ENCODE measurements at regions of chr9 and their contacts with region 1.

Region 1: DNA sequence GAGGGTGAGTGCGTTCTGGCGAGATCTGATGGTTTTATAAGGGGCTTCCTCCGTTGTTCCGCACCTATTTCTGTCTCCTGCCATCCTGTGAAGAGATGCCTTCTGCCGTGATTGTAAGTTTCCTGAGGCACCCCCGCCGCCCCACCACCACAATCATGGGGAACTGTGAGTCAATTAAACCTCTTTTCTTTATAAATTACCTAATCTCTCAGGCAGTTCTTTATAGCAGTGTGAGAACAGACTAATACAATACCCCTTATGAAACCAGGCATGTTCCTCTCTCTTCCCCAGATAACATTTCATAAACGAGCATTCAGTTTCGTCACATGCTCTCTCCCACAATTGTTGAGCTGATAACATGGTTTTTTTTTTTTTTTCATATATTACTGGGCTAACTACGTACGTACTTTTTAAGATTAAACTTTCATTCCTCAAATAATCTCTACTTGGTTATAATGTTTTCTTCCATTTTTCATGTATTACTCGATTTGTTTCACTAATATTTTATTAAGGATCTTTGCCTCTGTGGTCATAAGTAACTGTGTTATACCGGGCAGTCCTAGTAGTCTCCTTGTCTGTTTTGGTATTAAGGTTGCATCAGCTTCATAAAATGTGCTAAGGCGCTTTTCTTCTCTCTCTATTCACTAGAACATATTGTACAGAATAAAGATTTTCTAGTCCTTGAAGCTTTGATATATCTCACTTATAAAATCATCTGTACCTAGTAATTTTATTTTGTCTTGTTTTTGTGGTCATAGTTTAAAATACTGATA is 64.9 kb upstream of the MVB12B start:
- DNase-seq: no peak
- H3K4me3 ChIP-seq: no peak overlapping the region
- CTCF ChIP-seq: no peak
- POLR2A ChIP-seq: no peak

Region 2: DNA sequence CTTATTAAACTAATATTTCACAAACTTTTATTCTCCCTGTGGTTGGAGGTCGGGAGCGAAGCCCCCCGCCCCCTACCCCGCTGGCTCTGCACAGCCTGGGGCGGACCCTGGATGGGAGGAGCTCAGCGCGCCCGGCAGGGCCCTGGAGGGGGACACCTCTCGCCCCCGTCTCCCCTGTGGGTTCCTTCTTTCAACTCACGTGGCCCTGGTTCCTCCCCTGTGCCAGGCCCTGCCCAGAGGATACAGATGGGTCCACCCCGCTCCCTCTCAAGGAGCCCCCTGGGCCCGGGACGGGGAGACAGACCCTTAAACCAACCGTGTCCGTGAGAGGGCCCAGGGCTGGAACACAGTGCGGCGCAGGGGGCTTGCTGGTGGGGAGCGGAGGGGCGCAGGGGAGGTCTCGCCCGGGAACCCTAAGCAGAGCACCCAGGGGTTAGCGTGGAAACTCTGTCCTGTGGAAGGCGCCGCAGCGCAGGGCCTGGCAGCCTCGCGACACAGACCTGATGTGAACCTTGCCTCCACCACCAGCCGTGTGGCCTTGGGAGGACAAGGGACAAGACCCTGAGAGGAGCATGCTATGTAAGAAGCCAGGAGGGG is 38.8 kb before region 1 on chr9:
- intact Hi-C with region 1: no loop called
- DNase-seq: peak in 1 of 2 donors; percentile 64
- H3K4me3 ChIP-seq: no peak overlapping the region
- CTCF ChIP-seq: no peak
- POLR2A ChIP-seq: no peak

Region 3: DNA sequence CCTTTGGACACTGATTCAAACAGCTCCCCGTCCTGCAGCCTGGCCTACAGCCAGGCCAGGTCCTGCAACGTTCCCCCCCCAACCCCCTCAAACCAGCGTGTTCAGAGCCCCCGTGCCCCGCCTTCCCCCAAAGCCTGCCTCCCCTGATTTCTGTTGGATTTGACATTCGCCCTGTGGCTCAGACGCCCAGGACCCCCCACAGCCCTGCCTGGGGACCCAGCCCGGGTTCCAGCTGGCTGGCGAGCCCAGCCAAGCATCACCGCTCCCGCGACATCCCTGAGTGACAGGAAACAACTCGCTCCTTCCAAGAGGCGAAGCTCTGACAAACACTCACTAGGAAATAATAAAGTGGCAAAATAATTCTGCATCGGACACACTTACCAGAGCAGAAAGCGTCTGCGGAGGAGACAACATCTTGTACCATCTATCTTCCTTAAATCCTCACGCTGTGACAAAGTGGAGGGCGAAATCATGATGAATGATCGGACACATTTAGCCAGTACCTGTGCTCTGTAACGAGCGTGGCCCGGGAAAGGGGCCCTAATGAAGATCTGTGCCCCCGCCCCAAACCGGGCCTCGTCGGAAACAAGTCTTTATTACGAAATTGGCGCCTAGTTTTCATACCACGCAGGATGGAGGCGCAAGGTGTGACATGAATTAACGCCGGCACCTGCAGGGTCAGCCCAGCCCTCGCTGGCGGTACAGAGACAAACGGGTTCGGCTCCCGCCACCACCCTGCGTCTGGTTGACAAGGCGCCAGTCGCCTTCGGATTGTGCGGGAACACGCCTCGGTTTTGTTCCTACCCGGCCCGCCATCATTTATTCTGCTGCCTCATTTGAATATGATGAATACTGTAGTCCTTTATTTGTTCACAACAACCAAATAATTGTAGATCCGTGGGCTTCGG is 26.2 kb before region 1 on chr9:
- intact Hi-C with region 1: loop called (anchors 2 kb)
- DNase-seq: peak in 1 of 2 donors; percentile 46
- H3K4me3 ChIP-seq: no peak overlapping the region
- CTCF ChIP-seq: no peak
- POLR2A ChIP-seq: no peak

Measured in lower leg skin (tissue), 4 donors.